GM23248 (cell line): ENCODE measurements at regions of chr4 and their contacts with region 1.

Region 1: DNA sequence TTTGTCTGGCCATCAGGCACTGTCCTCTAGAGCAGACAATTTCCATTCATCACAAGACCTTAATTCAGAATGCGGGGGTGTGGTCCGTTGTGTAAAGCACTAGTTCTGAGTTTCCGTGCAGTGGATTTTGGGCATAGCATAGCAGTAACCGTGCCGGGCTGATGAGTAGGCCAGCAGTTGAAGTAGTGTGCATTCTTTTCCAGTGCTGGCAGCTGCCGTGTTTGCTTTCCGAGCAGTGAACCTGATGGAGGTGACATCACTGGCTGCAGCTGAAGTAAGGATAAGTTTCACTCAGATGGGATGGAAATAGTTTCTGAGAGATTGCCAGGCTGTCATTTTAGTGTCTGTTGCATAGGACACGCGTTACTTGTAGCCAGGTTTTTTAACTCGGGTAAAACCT is 107.0 kb upstream of the STIM2 start:
- DNase-seq: peak; percentile 1
- H3K4me3 ChIP-seq: no peak overlapping the region
- H3K27ac ChIP-seq: no peak overlapping the region
- H3K4me1 ChIP-seq: no peaks in the 10 kb centered on the region
- H3K27me3 ChIP-seq: no peaks in the 10 kb centered on the region

Region 2: DNA sequence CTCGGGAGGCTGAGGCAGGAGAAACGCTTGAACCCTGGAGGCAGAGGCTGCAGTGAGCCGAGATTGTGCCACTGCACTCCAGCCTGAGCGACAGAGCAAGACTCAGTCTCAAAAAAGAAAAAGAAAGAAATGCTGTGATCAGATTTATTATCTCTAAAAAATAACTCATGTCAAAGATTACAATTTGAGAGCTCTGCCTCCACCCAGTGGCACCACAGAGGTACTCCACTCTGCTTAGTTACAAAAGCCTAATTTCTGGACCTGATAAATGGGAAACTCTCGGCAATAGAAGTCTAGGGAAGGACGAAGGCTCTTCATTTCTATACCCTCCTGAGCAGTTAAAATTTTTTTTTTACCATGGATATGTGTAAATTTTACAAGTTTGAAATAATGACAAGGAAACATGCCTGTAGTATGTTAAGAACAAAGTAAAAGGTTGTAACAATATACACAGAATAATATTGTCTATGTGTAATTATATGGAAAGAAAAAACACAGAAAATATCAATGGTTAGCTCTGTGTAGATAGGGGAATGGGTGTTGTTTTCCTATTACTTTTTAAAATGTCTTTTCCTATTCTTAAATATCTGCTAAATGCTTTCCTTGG is 256.8 kb after region 1 on chr4:
- in situ Hi-C with region 1: loop called (anchors 25 kb)
- DNase-seq: peak; percentile 81
- H3K4me3 ChIP-seq: peak overlapping the region; percentile 35; the same call in 1 of the 2 replicates
- H3K27ac ChIP-seq: no peak overlapping the region
- H3K4me1 ChIP-seq: peaks cover 48% of the 10 kb centered on the region
- H3K27me3 ChIP-seq: no peaks in the 10 kb centered on the region